ENCODE measurements at regions of chr19 and their contacts with region 1.

Region 1: DNA sequence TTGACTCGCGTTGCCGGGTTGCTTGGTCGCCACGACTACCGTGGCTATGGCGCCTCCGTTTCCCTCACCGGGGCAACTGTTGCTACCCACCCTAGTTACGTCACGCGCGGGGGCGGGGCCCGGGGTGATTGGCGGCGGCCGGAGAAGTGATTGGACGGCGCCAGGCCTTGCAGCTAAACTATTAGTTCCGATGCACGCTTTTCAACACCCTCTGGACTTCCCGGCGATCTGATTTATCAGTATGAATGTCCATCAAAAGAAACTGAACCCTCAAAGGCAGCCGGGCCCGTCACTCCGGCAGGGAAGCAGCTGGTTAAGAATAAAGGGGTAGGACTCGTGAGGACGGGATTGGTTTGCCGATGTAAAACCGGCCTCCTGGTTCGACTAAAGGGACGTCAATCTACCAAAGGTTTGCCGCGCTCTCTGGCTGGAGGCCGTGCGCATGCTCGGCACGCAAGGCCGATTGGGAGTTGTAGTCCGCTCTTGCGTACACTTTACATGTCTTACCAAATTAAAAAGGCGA is at the start of gene RFX1:
- DNase-seq: peak; percentile 99 to 100 (median 100)
- ATAC-seq: peak; percentile 79
- H3K4me3 ChIP-seq: peak within 1 kb of the TSS; percentile 77
- H3K4me3 Mint-ChIP-seq: peak within 1 kb of the TSS; percentile 91 to 98 (median 96)
- H3K27ac ChIP-seq: peak within 1 kb of the TSS; percentile 99
- H3K27ac Mint-ChIP-seq: peak within 1 kb of the TSS; percentile 98 to 100 (median 100)
- H3K4me1 ChIP-seq: peaks cover 36 to 41% of the 10 kb centered on the region in 2 donors
- H3K4me1 Mint-ChIP-seq: peaks cover 26 to 47% (median 38%) of the 10 kb centered on the region in 7 donors
- H3K27me3 ChIP-seq: no peaks in the 10 kb centered on the region
- H3K27me3 Mint-ChIP-seq: no peaks in the 10 kb centered on the region
- total RNA-seq, gene RFX1: 15.7 to 23.5 (median 20.5) TPM

Region 2: GRCh38 chr19:13774217-13775191 is 231.8 kb before region 1 on chr19 and contains the start of gene C19orf53:
- CTCF ChIA-PET with region 1: no interaction called
- POLR2A ChIA-PET with region 1: interaction called, 4 read pairs
- intact Hi-C with region 1: loop called in 1 of 2 experiments (anchors 1 kb)
- DNase-seq: peak; percentile 74 to 89 (median 86)
- ATAC-seq: peak; percentile 99
- H3K4me3 ChIP-seq: peak within 1 kb of the TSS; percentile 94
- H3K4me3 Mint-ChIP-seq: peak within 1 kb of the TSS; percentile 90 to 100 (median 99)
- H3K27ac ChIP-seq: peak within 1 kb of the TSS; percentile 90
- H3K27ac Mint-ChIP-seq: peak within 1 kb of the TSS; percentile 92 to 100 (median 97)
- H3K4me1 ChIP-seq: peaks cover 9 to 15% of the 10 kb centered on the region in 2 donors
- H3K4me1 Mint-ChIP-seq: peaks cover 10 to 37% (median 28%) of the 10 kb centered on the region in 7 donors
- H3K27me3 ChIP-seq: no peaks in the 10 kb centered on the region
- H3K27me3 Mint-ChIP-seq: no peaks in the 10 kb centered on the region
- total RNA-seq, gene C19orf53: 57.2 to 108 (median 86.2) TPM

Region 3: DNA sequence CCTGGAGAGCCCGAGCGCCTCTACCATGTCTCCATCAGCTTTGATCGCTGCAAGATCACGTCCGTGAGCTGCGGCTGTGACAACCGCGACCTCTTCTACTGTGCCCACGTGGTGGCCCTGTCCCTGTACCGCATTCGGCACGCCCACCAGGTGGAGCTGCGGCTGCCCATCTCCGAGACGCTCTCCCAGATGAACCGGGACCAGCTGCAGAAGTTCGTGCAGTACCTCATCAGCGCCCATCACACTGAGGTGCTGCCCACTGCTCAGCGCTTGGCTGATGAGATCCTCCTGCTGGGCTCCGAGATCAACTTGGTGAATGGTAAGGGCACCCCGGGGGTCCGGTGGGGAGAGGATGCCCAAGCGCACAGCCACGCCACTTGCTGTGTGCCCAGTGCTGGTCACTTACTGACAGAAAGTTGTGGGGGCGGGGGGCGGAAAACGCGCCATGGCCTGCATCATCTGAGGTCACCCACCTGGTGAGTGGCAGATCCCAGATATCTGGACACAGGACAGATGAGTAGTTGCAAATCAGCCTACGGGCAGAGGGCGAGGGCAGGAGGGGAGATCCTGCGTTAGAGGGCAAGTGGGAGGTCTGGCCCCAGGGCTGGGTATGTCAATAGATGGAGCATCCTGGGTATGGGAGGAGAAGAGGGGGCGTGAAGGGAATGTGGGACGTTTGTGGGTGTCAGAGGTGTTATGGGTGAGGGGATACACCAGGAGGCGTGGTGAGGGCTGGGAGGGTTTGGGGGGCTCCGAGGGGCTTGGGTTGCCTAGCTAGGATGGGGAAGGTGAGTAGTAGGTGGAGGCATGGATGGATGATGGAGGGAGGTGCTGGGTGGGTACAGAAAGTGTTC is 201.2 kb before region 1 on chr19:
- CTCF ChIA-PET with region 1: no interaction called
- POLR2A ChIA-PET with region 1: no interaction called
- intact Hi-C with region 1: no loop called
- DNase-seq: no peak
- ATAC-seq: no peak
- H3K4me3 ChIP-seq: no peak overlapping the region
- H3K4me3 Mint-ChIP-seq: no peak overlapping the region
- H3K27ac ChIP-seq: no peak overlapping the region
- H3K27ac Mint-ChIP-seq: peak overlapping the region in 1 of 9 donors; percentile 74
- H3K4me1 ChIP-seq: no peaks in the 10 kb centered on the region
- H3K4me1 Mint-ChIP-seq: peaks cover 0 to 6% (median 3%) of the 10 kb centered on the region in 7 donors
- H3K27me3 ChIP-seq: no peaks in the 10 kb centered on the region
- H3K27me3 Mint-ChIP-seq: no peaks in the 10 kb centered on the region

Region 4: GRCh38 chr19:13905938-13906904 is 100.1 kb before region 1 on chr19 and contains the starts of genes BRME1 and CC2D1A:
- CTCF ChIA-PET with region 1: interaction called, 6 read pairs
- POLR2A ChIA-PET with region 1: interaction called, 4 read pairs
- intact Hi-C with region 1: loop called (anchors 1 kb)
- DNase-seq: peak; percentile 87 to 94 (median 92)
- ATAC-seq: peak; percentile 100
- H3K4me3 ChIP-seq: peak within 1 kb of the TSS; percentile 84
- H3K4me3 Mint-ChIP-seq: peak within 1 kb of the TSS; percentile 84 to 94 (median 88)
- H3K27ac ChIP-seq: peak within 1 kb of the TSS; percentile 77
- H3K27ac Mint-ChIP-seq: peak within 1 kb of the TSS; percentile 83 to 94 (median 91)
- H3K4me1 ChIP-seq: peaks cover 12% of the 10 kb centered on the region in 2 donors
- H3K4me1 Mint-ChIP-seq: peaks cover 12 to 29% (median 16%) of the 10 kb centered on the region in 7 donors
- H3K27me3 ChIP-seq: no peaks in the 10 kb centered on the region
- H3K27me3 Mint-ChIP-seq: no peaks in the 10 kb centered on the region
- total RNA-seq, gene BRME1: 1.8 to 13.7 (median 2.9) TPM
- total RNA-seq, gene CC2D1A: 21.0 to 33.1 (median 29.8) TPM

Region 5: GRCh38 chr19:13978347-13978733 is 28.0 kb before region 1 on chr19:
- CTCF ChIA-PET with region 1: interaction called, 3 read pairs
- POLR2A ChIA-PET with region 1: interaction called, 160 read pairs
- intact Hi-C with region 1: loop called in 1 of 2 experiments (anchors 1 kb)
- DNase-seq: no peak
- ATAC-seq: peak; percentile 40
- H3K4me3 ChIP-seq: no peak overlapping the region
- H3K4me3 Mint-ChIP-seq: peak overlapping the region in 6 of 10 donors; percentile 13 to 70 (median 28)
- H3K27ac ChIP-seq: peak overlapping the region; percentile 62
- H3K27ac Mint-ChIP-seq: peak overlapping the region in 4 of 9 donors; percentile 34 to 62 (median 44)
- H3K4me1 ChIP-seq: peaks cover 0 to 30% of the 10 kb centered on the region in 2 donors
- H3K4me1 Mint-ChIP-seq: peaks cover 14 to 51% (median 26%) of the 10 kb centered on the region in 7 donors
- H3K27me3 ChIP-seq: no peaks in the 10 kb centered on the region
- H3K27me3 Mint-ChIP-seq: no peaks in the 10 kb centered on the region

Region 6: GRCh38 chr19:14031719-14032480 is 25.6 kb after region 1 on chr19 and contains the start of gene IL27RA:
- CTCF ChIA-PET with region 1: interaction called, 4 read pairs
- POLR2A ChIA-PET with region 1: interaction called, 162 read pairs
- intact Hi-C with region 1: loop called (anchors 1 kb)
- DNase-seq: peak; percentile 71 to 89 (median 87)
- ATAC-seq: peak; percentile 85
- H3K4me3 ChIP-seq: peak within 1 kb of the TSS; percentile 98
- H3K4me3 Mint-ChIP-seq: peak within 1 kb of the TSS; percentile 88 to 97 (median 94)
- H3K27ac ChIP-seq: peak within 1 kb of the TSS; percentile 99
- H3K27ac Mint-ChIP-seq: peak within 1 kb of the TSS; percentile 92 to 97 (median 95)
- H3K4me1 ChIP-seq: peaks cover 16% of the 10 kb centered on the region in 2 donors
- H3K4me1 Mint-ChIP-seq: peaks cover 21 to 52% (median 36%) of the 10 kb centered on the region in 7 donors
- H3K27me3 ChIP-seq: no peaks in the 10 kb centered on the region
- H3K27me3 Mint-ChIP-seq: peaks cover 0 to 1% (median 0%) of the 10 kb centered on the region in 5 donors
- total RNA-seq, gene IL27RA: 32.1 to 118 (median 83.2) TPM

Region 7: DNA sequence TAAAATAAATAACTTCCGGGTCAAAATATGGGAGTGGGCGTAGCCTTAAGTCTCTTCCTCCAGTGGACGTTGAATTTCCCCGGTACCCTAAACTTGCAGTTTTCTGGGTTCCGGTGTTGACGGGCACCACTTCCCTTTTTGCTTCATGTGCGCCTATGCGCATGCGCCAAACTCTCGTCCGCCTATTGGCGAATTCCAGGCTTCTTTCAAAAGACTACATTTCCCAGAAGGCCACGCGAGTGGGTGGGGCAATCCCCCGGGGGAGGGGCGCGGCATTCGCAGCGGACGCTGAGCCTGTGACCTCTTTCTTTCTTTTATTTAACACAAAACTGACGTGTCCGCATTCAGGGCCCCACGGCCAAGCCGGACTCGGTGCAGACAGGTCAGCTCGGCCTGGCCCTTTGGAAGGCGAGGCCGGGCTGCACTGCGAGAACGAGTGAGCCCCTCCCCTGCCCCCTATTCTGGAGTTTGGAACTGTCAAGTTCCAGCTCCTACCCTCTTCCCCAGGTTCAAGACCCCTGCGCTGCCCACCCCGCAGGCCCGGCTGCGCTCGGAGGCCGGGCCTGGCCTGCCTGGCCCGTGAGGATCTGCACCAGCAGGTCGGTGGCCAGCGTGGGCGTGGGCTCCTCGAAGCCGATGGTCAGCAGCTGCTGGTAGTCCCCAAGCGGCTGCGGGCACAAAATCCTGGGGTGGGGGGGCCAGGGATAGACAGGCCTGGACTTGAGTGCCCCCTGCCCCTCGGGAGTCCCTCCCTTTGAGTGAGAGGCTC is 75.2 kb after region 1 on chr19:
- CTCF ChIA-PET with region 1: no interaction called
- POLR2A ChIA-PET with region 1: interaction called, 4 read pairs
- intact Hi-C with region 1: loop called (anchors 1 to 2 kb)
- DNase-seq: peak; percentile 96 to 100 (median 99)
- ATAC-seq: peak; percentile 97
- H3K4me3 ChIP-seq: peak overlapping the region; percentile 86
- H3K4me3 Mint-ChIP-seq: peak overlapping the region; percentile 80 to 98 (median 94)
- H3K27ac ChIP-seq: peak overlapping the region; percentile 80
- H3K27ac Mint-ChIP-seq: peak overlapping the region; percentile 86 to 98 (median 95)
- H3K4me1 ChIP-seq: peaks cover 5 to 15% of the 10 kb centered on the region in 2 donors
- H3K4me1 Mint-ChIP-seq: peaks cover 0 to 27% (median 17%) of the 10 kb centered on the region in 7 donors
- H3K27me3 ChIP-seq: no peaks in the 10 kb centered on the region
- H3K27me3 Mint-ChIP-seq: no peaks in the 10 kb centered on the region

Region 8: DNA sequence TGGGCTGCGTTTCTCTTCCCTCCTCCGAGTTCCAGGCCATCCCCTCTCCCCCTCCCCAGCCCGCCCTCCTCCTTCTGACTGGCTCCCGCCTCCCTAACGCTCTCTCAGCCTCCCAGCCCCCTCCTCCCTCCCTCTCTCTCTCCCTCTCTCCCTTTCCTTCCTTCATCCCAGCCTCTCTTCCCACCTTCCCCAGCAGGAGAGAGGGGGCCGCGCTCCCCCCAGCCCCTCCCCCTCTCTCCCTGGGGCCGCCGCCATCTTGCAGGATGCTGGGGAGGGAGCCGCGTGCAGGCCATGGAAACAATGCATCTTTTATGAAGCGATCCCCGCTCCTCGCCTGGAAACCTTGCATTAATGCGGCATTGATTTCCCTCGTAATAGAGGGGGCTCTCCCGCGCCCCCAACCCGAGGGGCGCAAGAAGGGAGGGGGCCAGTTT is 242.3 kb after region 1 on chr19:
- CTCF ChIA-PET with region 1: no interaction called
- POLR2A ChIA-PET with region 1: no interaction called
- intact Hi-C with region 1: no loop called
- DNase-seq: peak in 8 of 9 donors; percentile 9 to 56 (median 34)
- ATAC-seq: peak; percentile 63
- H3K4me3 ChIP-seq: peak overlapping the region; percentile 52
- H3K4me3 Mint-ChIP-seq: peak overlapping the region; percentile 36 to 82 (median 72)
- H3K27ac ChIP-seq: peak overlapping the region; percentile 63
- H3K27ac Mint-ChIP-seq: peak overlapping the region in 8 of 9 donors; percentile 46 to 78 (median 62)
- H3K4me1 ChIP-seq: no peaks in the 10 kb centered on the region
- H3K4me1 Mint-ChIP-seq: peaks cover 4 to 15% (median 13%) of the 10 kb centered on the region in 7 donors
- H3K27me3 ChIP-seq: no peaks in the 10 kb centered on the region
- H3K27me3 Mint-ChIP-seq: peaks cover 0 to 9% (median 0%) of the 10 kb centered on the region in 5 donors

Region 9: DNA sequence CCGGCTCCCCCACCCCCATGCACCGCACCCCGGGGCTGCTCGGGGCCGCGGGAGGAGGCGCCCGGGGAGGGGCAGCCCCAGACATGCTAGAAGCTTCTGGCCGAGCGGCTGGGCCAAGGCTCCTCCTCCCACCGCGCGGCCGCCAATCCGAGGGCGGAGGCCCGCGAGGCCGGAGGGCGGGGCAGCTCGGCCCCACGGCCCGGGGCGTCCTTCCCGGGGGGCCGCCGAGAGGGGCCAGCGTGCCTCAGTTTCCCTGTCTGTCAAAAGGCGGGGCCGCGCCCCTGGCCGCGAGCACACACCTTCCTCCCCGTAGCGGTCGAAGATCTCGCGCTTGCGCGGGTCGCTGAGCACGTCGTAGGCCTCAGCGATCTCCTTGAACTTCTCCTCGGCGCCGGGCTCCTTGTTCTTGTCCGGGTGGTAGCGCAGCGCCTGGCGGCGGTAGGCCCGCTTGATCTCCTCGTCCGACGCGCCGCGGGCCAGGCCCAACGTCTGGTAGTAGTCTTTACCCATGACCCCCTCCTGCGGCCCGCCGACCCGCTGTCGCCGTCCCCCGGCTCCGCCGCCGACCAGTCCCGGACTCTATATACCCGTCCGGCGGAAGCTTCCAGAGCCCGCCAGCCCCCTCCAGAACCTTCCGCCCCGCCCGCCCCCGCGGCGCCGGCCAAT is 511.7 kb after region 1 on chr19 and contains the start of gene DNAJB1:
- CTCF ChIA-PET with region 1: interaction called, 3 read pairs
- POLR2A ChIA-PET with region 1: interaction called, 3 read pairs
- intact Hi-C with region 1: loop called in 1 of 2 experiments (anchors 5 kb)
- DNase-seq: peak in 2 of 9 donors; percentile 53 to 86
- ATAC-seq: peak; percentile 33
- H3K4me3 ChIP-seq: peak within 1 kb of the TSS; percentile 73
- H3K4me3 Mint-ChIP-seq: peak within 1 kb of the TSS; percentile 93 to 99 (median 96)
- H3K27ac ChIP-seq: peak within 1 kb of the TSS; percentile 97
- H3K27ac Mint-ChIP-seq: peak within 1 kb of the TSS; percentile 92 to 100 (median 98)
- H3K4me1 ChIP-seq: peaks cover 57 to 64% of the 10 kb centered on the region in 2 donors
- H3K4me1 Mint-ChIP-seq: peaks cover 42 to 80% (median 72%) of the 10 kb centered on the region in 7 donors
- H3K27me3 ChIP-seq: no peaks in the 10 kb centered on the region
- H3K27me3 Mint-ChIP-seq: peaks cover 0 to 2% (median 0%) of the 10 kb centered on the region in 5 donors
- total RNA-seq, gene DNAJB1: 87.4 to 574 (median 177) TPM